Right cardiac atrium (tissue), 5 donors: ENCODE measurements at regions of chr5 and their contacts with region 1.

Region 1: GRCh38 chr5:158174918-158175851 is 316.2 kb upstream of the CLINT1 start:
- DNase-seq: peak; percentile 69 to 88 (median 81)
- ATAC-seq: peak; percentile 87 to 92
- H3K4me3 ChIP-seq: no peak overlapping the region
- H3K27ac ChIP-seq: peak overlapping the region; percentile 59
- H3K4me1 ChIP-seq: peaks cover 3% of the 10 kb centered on the region
- H3K27me3 ChIP-seq: no peaks in the 10 kb centered on the region

Region 2: DNA sequence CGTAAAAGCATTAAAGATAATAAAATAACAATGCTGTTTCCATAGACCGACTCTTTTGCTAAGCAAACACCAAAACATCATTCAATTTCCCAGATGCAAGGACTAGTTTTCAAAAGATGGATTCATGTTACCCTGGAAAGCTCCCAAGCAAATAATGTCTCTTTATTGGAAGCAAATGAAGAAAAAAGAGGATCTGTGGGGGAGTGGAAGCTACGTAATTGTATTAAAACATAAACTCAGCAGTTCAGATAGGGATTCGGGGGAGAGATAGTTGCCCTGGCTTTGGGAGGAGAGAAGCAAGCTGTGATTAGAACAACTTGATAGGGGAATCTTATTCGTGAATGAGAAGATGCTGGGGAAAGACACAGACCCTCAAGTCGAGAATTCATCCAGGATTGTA is 174.8 kb after region 1 on chr5:
- intact Hi-C with region 1: no loop called
- DNase-seq: no peak
- ATAC-seq: no peak
- H3K4me3 ChIP-seq: no peak overlapping the region
- H3K27ac ChIP-seq: no peak overlapping the region
- H3K4me1 ChIP-seq: peaks cover 2% of the 10 kb centered on the region
- H3K27me3 ChIP-seq: no peaks in the 10 kb centered on the region

Region 3: DNA sequence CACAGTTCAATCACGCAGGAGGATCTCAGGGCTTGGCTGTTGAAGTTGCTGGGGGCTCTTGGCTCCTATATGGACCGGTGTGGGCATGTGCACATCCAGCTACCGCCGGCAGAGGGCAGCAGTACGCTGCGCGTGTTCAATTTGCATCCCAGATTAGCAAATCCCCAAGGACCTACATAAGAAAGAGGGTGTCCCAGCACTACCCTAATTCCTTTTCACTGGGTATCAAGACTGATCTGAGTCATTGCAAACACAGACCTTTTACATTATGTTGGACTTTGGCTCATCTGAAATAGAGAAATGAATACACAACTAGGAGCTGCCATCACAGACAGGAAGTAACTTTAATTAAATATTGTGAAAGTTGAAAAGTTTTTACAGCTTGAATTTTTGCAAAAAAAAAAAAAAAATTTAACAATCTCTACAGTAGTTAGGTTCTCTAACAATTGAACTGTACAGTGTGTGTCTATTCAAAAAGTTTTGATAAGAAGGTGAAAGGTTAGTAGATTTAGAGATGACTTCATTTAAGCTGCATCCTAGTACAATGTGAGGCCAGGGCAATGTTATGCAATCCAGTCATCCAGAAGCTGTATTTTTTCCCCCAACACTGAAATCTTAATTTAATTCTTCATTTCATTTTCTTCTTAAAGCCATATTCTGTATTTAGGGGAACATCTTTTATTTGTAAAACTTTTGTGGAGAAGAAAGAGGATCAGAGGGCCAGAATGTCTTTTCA is 520.6 kb after region 1 on chr5:
- intact Hi-C with region 1: loop called (anchors 5 to 10 kb)
- DNase-seq: peak; percentile 73 to 90 (median 86)
- ATAC-seq: peak; percentile 66 to 86
- H3K4me3 ChIP-seq: no peak overlapping the region
- H3K27ac ChIP-seq: no peak overlapping the region
- H3K4me1 ChIP-seq: peaks cover 2% of the 10 kb centered on the region
- H3K27me3 ChIP-seq: no peaks in the 10 kb centered on the region